Activated B cell treated with CpG ODN at 0.5 μM for 24 hours (primary cell): ENCODE measurements at regions of chr6 and their contacts with region 1.

Region 1: GRCh38 chr6:112163295-112164257 is 76.2 kb downstream of the FAM229B start:
- DNase-seq: peak; percentile 58
- ATAC-seq: peak; percentile 98
- H3K4me3 Mint-ChIP-seq: peak overlapping the region; percentile 32
- H3K27ac Mint-ChIP-seq: no peak overlapping the region
- H3K4me1 Mint-ChIP-seq: peaks cover 8% of the 10 kb centered on the region
- H3K27me3 Mint-ChIP-seq: peaks cover 40% of the 10 kb centered on the region
- CTCF ChIP-seq: no peak

Region 2: DNA sequence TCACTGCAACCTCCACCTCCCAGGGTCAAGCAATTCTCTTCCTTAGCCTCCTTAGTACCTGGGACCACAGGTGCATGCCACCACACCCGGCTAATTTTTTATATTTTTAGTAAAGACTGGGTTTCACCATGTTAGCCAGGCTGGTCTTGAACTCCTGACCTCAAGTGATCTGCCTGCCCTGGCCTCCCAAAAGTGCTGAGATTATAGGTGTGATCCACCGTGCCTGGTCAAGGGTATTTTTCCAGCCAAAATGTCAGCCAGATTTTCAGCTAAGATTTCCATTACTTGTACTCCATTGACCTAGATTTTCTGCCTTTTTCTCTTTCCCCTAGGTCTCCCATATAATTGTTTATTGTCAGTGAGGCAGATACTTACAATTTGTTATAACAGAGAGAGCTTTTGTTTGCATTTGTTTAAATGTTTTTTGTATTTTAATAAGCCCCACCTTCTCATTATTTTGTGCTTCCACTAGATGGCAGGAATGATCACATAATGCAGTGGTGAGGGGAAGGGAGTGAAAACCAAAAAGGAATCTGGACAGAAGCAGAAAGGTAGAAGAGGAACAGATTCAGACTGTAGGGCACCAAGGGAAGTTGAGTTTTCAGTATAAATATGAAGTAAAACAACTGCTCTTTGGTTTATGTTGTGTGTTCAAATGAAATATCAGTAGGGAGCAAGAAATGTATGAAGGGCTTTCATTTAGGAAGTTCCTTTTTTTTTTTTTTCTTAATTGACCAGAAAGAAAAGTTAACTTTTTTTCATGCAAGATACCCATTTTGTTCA is 1152.0 kb before region 1 on chr6:
- CTCF ChIA-PET with region 1: no interaction called
- POLR2A ChIA-PET with region 1: no interaction called
- intact Hi-C with region 1: loop called (anchors 2 kb)
- DNase-seq: no peak
- ATAC-seq: peak; percentile 50
- H3K4me3 Mint-ChIP-seq: no peak overlapping the region
- H3K27ac Mint-ChIP-seq: no peak overlapping the region
- H3K4me1 Mint-ChIP-seq: peaks cover 4% of the 10 kb centered on the region
- H3K27me3 Mint-ChIP-seq: no peaks in the 10 kb centered on the region
- CTCF ChIP-seq: no peak

Region 3: GRCh38 chr6:111709615-111710398 is 453.8 kb before region 1 on chr6:
- CTCF ChIA-PET with region 1: interaction called, 8 read pairs
- POLR2A ChIA-PET with region 1: no interaction called
- intact Hi-C with region 1: loop called (anchors 1 kb)
- DNase-seq: no peak
- ATAC-seq: peak; percentile 97
- H3K4me3 Mint-ChIP-seq: peak overlapping the region; percentile 19
- H3K27ac Mint-ChIP-seq: no peak overlapping the region
- H3K4me1 Mint-ChIP-seq: peaks cover 4% of the 10 kb centered on the region
- H3K27me3 Mint-ChIP-seq: no peaks in the 10 kb centered on the region
- CTCF ChIP-seq: peak; percentile 44

Region 4: DNA sequence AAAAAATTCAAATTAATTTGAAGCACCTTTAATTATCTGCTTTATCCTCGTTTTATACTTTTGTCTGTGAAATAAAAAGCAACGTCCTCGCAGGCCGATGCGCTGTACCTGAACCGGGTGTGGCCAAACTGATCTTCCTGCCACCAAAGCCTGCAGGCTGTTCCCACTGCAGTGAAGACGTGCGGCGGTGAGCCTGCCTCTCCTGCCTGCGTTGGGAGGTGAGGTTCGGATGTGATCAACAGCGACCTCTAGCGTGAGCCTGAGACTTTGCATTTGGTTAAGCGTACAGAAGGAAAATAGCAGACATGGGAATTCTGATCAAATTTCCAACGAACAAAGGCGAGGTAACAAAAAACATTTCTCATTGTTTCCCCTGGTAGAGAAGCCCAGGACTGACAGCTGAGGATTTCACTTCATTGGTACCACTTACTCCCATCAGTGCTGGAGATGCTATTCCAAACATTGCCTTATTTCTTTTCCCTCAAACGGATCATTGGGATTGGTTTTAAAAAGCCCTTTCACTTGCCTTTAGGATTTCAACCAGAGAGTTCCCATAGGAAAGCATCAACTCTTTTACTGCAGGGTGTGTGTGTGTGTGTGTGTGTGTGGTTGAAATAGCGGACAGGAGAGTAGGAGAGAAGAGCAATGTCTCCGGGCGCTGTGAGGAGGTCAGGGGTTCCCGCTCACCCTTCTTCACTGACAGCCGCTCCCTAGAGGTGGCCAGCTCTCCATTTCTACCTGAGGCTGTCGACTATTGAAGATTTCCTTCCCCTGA is 166.3 kb before region 1 on chr6:
- CTCF ChIA-PET with region 1: no interaction called
- POLR2A ChIA-PET with region 1: no interaction called
- intact Hi-C with region 1: loop called (anchors 1 kb)
- DNase-seq: peak; percentile 49
- ATAC-seq: peak; percentile 90
- H3K4me3 Mint-ChIP-seq: peak overlapping the region; percentile 42
- H3K27ac Mint-ChIP-seq: no peak overlapping the region
- H3K4me1 Mint-ChIP-seq: peaks cover 6% of the 10 kb centered on the region
- H3K27me3 Mint-ChIP-seq: peaks cover 2% of the 10 kb centered on the region
- CTCF ChIP-seq: no peak

Region 5: GRCh38 chr6:112269114-112269513 is 105.5 kb after region 1 on chr6:
- CTCF ChIA-PET with region 1: no interaction called
- POLR2A ChIA-PET with region 1: no interaction called
- intact Hi-C with region 1: no loop called
- DNase-seq: no peak
- ATAC-seq: no peak
- H3K4me3 Mint-ChIP-seq: no peak overlapping the region
- H3K27ac Mint-ChIP-seq: no peak overlapping the region
- H3K4me1 Mint-ChIP-seq: no peaks in the 10 kb centered on the region
- H3K27me3 Mint-ChIP-seq: peaks cover 2% of the 10 kb centered on the region
- CTCF ChIP-seq: no peak